CD8-positive, alpha-beta T cell (primary cell): ENCODE measurements at regions of chr3 and their contacts with region 1.

Region 1: GRCh38 chr3:83011481-83011880 is 1250.0 kb upstream of the GBE1 start:
- DNase-seq: no peak
- ATAC-seq: no peak
- H3K4me3 ChIP-seq: no peak overlapping the region
- H3K4me3 Mint-ChIP-seq: no peak overlapping the region
- H3K27ac ChIP-seq: no peak overlapping the region
- H3K27ac Mint-ChIP-seq: no peak overlapping the region
- H3K4me1 ChIP-seq: no peaks in the 10 kb centered on the region
- H3K4me1 Mint-ChIP-seq: no peaks in the 10 kb centered on the region
- H3K27me3 ChIP-seq: no peaks in the 10 kb centered on the region
- H3K27me3 Mint-ChIP-seq: no peaks in the 10 kb centered on the region
- CTCF ChIP-seq: no peak

Region 2: GRCh38 chr3:83023050-83023449 is 11.6 kb after region 1 on chr3:
- CTCF ChIA-PET with region 1: no interaction called
- POLR2A ChIA-PET with region 1: no interaction called
- intact Hi-C with region 1: loop called in 1 of 2 experiments (anchors 1 kb)
- DNase-seq: no peak
- ATAC-seq: no peak
- H3K4me3 ChIP-seq: no peak overlapping the region
- H3K4me3 Mint-ChIP-seq: no peak overlapping the region
- H3K27ac ChIP-seq: no peak overlapping the region
- H3K27ac Mint-ChIP-seq: no peak overlapping the region
- H3K4me1 ChIP-seq: no peaks in the 10 kb centered on the region
- H3K4me1 Mint-ChIP-seq: no peaks in the 10 kb centered on the region
- H3K27me3 ChIP-seq: no peaks in the 10 kb centered on the region
- H3K27me3 Mint-ChIP-seq: no peaks in the 10 kb centered on the region
- CTCF ChIP-seq: no peak

Region 3: DNA sequence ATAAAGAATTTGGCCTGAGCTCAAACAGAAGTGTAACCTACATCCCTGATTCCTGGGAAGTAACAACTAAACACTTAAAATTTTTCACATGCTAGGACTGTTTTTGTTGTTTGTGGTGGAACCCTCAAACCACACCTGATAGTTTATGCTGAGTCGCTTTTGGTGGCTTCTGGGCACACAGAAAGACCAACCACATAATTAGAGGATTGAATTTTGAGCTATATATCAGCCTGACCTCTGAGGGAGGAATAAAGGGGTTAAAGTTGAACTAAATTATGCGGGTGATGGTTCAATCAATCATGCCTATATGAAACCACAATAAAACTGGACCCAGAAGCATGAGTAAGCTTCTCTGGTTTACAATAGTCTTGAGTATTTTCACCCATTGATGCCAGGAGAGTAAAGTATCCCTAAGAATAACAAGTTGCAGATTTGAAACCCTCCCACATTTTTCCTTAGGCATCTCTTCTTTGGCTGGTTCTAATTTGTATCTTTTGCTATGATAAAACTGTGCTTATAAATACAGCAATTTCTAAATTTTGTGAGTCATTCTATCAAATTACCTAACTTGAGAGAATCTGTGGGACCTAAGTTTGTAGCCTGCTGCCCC is 54.5 kb after region 1 on chr3:
- CTCF ChIA-PET with region 1: no interaction called
- POLR2A ChIA-PET with region 1: no interaction called
- intact Hi-C with region 1: no loop called
- DNase-seq: no peak
- ATAC-seq: no peak
- H3K4me3 ChIP-seq: no peak overlapping the region
- H3K4me3 Mint-ChIP-seq: no peak overlapping the region
- H3K27ac ChIP-seq: no peak overlapping the region
- H3K27ac Mint-ChIP-seq: no peak overlapping the region
- H3K4me1 ChIP-seq: no peaks in the 10 kb centered on the region
- H3K4me1 Mint-ChIP-seq: no peaks in the 10 kb centered on the region
- H3K27me3 ChIP-seq: no peaks in the 10 kb centered on the region
- H3K27me3 Mint-ChIP-seq: no peaks in the 10 kb centered on the region
- CTCF ChIP-seq: no peak